Mammary epithelial cell (primary cell): ENCODE measurements at regions of chr10 and their contacts with region 1.

Region 1: GRCh38 chr10:18577823-18578685 is 73.3 kb downstream of the NSUN6 start:
- DNase-seq: no peak
- H3K4me3 ChIP-seq: no peak overlapping the region
- H3K27ac ChIP-seq: no peak overlapping the region
- H3K4me1 ChIP-seq: peaks cover 3% of the 10 kb centered on the region
- H3K27me3 ChIP-seq: no peaks in the 10 kb centered on the region
- CTCF ChIP-seq: no peak

Region 2: GRCh38 chr10:18594574-18595156 is 16.6 kb after region 1 on chr10:
- CTCF ChIA-PET with region 1: no interaction called
- dilution Hi-C with region 1: no loop called
- in situ Hi-C with region 1: no loop called
- intact Hi-C with region 1: loop called (anchors 2 kb)
- DNase-seq: no peak
- H3K4me3 ChIP-seq: no peak overlapping the region
- H3K27ac ChIP-seq: no peak overlapping the region
- H3K4me1 ChIP-seq: no peaks in the 10 kb centered on the region
- H3K27me3 ChIP-seq: no peaks in the 10 kb centered on the region
- CTCF ChIP-seq: peak; percentile 30 to 37

Region 3: DNA sequence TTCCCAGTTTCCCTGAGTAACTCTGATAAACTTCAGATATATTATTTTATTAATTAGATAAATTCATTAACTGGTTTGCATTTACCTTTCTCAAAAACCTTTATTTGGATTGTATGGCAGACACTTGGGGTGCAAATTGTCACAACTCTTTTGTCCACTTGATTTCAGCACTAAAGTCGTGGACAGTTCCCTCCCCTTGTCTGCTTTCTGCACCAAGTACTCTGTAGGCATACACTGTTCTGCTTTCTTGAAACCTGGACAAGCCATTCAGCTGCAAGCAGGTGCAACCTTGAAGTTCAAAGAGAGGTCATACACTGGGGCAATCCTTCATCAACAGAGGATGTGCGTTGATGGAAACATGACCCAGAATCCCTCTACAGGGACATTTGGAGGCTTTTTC is 244.1 kb after region 1 on chr10:
- CTCF ChIA-PET with region 1: no interaction called
- dilution Hi-C with region 1: no loop called
- in situ Hi-C with region 1: no loop called
- intact Hi-C with region 1: no loop called
- DNase-seq: no peak
- H3K4me3 ChIP-seq: no peak overlapping the region
- H3K27ac ChIP-seq: no peak overlapping the region
- H3K4me1 ChIP-seq: no peaks in the 10 kb centered on the region
- H3K27me3 ChIP-seq: no peaks in the 10 kb centered on the region
- CTCF ChIP-seq: no peak